Sigmoid colon (tissue), 7 donors: ENCODE measurements at regions of chr14 and their contacts with region 1.

Region 1: DNA sequence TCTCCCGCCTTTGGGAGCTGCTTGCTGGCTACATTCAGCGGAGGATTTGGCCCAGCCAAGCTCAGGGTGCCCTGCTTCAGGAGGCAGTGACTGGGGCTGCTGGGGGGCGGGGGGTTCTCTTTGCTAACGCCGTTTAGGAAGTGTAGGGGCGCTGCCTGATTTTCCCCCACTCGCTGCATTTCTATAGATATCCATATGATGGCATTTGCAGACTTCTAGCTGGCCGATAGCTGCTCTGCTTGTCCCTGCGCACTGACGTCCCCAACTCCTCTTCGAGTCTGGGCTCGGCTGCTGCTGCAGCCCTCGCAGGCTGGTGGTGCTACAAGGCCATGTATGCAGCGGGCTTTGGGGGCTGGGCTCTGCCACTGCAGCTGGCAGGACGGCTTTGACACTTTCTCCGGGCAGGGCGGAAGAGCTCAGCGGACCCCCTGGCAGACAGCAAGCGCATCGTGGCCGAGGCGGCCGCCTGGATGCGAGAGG is 3.1 kb downstream of the LRFN5 start:
- DNase-seq: peak; percentile 74
- H3K4me3 ChIP-seq: peak overlapping the region; percentile 41 to 59 (median 56)
- H3K27ac ChIP-seq: peak overlapping the region; percentile 62 to 83 (median 79)
- H3K4me1 ChIP-seq: peaks cover 0 to 43% (median 37%) of the 10 kb centered on the region in 4 donors
- H3K27me3 ChIP-seq: peaks cover 4 to 63% (median 47%) of the 10 kb centered on the region in 3 donors
- CTCF ChIP-seq: peak in 1 of 4 experiments; percentile 14
- EP300 ChIP-seq: no peak
- POLR2A ChIP-seq: no peak

Region 2: DNA sequence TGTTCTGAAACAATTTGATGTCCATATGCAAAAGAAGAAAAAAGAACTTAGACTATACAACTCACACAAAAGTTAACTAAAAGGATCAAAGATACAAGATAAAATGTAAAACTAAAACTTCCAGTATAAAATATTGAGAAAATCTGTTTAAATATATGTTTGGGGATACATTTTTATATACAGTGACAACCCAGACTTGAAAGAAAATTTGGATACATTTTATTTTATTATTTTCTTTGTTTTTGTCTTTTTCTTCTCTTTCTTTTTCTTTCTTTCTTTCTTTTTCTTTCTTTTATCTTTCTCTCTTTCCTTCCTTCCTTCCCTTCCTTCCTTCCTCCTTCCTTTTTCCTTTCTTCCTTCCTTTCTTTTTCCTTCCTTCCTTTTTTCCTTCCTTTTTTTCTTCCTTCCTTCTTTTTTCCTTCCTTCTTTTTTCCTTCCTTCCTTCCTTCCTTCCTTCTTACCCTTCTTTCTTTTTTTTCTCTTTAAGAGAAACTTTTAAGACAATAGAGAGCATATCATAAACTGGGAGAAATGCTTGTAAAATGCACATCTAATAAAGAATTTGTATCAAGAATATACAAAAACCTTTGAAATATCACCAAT is 957.6 kb before region 1 on chr14:
- intact Hi-C with region 1: no loop called
- DNase-seq: no peak
- H3K4me3 ChIP-seq: no peak overlapping the region
- H3K27ac ChIP-seq: no peak overlapping the region
- H3K4me1 ChIP-seq: no peaks in the 10 kb centered on the region
- H3K27me3 ChIP-seq: no peaks in the 10 kb centered on the region
- CTCF ChIP-seq: no peak
- EP300 ChIP-seq: no peak
- POLR2A ChIP-seq: no peak

Region 3: GRCh38 chr14:41235466-41235865 is 374.3 kb before region 1 on chr14:
- intact Hi-C with region 1: no loop called
- DNase-seq: no peak
- H3K4me3 ChIP-seq: no peak overlapping the region
- H3K27ac ChIP-seq: no peak overlapping the region
- H3K4me1 ChIP-seq: no peaks in the 10 kb centered on the region
- H3K27me3 ChIP-seq: no peaks in the 10 kb centered on the region
- CTCF ChIP-seq: no peak
- EP300 ChIP-seq: no peak
- POLR2A ChIP-seq: no peak

Region 4: DNA sequence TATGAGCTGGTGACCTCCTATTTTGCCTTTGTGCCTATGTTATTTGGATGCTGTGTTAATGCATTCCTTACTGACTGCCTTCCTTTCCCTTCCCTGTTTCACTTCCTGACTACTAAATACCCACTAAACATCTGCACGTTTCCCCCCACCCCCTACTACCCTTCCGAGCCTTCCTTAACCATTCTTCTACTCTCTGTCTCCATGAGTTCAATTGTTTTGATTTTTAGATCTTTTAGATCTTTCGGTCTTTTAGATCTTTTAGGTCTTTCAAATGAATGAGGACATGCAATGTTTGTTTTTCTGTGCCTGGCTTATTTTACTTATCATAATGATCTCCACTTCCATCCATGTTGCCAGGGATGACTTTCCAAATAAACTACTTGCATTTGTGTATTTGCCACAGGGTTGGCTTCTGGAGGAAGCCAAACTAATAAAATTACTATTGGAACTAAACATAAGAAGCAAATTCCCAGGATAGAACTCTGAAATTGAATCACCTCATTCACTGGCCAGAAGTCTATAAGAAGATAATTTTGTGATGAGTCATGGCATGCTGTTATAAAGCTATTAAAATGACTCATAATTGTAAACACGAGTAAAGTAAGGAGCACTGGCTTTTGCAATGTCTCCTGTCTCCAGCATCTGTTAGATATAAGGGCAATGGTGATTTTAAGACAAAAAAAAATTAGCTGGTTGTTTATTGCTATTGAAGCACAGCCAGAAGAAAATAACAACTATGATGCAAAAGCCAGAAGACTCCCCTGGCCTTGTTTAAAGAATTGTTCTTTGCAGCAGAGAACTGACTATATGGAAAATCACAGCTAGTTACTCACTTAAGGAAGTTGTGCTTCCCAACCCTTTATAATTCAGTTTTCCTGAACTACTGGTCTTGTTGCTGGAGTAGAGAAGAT is 583.3 kb after region 1 on chr14:
- intact Hi-C with region 1: loop called (anchors 10 kb)
- DNase-seq: no peak
- H3K4me3 ChIP-seq: no peak overlapping the region
- H3K27ac ChIP-seq: peak overlapping the region in 2 of 4 donors; percentile 44 to 51
- H3K4me1 ChIP-seq: peaks cover 0 to 18% (median 13%) of the 10 kb centered on the region in 4 donors
- H3K27me3 ChIP-seq: no peaks in the 10 kb centered on the region
- CTCF ChIP-seq: no peak
- EP300 ChIP-seq: peak in 2 of 4 donors; percentile 26 to 37
- POLR2A ChIP-seq: no peak